ENCODE measurements at regions of chr5 and their contacts with region 1.

Region 1: DNA sequence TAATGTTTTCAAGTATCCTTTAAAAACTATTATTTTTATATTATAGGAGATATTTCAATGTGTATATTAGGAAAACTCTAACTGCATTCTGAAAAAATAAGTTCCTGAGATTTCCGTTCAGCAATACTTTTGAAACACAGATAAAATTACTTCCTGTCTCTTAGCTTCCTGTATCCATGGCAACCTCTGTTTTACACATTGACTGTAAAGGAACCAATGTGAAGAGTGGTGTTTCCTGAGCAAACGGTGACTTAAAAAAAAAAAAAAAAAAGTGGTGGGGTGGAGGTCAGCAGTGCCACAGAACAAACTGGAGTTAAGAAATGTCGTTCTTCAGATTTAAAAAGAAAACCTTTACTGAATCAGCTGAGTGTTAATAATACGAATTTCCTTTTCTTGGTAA is at the start of gene LRRC70:
- DNase-seq: peak; percentile 24
- H3K4me3 Mint-ChIP-seq: peak within 1 kb of the TSS; percentile 19
- H3K27ac Mint-ChIP-seq: peak within 1 kb of the TSS; percentile 77
- H3K4me1 Mint-ChIP-seq: peaks cover 53% of the 10 kb centered on the region
- H3K27me3 Mint-ChIP-seq: no peaks in the 10 kb centered on the region
- total RNA-seq, gene LRRC70: 0.46 and 1.1 TPM in 2 replicates

Region 2: DNA sequence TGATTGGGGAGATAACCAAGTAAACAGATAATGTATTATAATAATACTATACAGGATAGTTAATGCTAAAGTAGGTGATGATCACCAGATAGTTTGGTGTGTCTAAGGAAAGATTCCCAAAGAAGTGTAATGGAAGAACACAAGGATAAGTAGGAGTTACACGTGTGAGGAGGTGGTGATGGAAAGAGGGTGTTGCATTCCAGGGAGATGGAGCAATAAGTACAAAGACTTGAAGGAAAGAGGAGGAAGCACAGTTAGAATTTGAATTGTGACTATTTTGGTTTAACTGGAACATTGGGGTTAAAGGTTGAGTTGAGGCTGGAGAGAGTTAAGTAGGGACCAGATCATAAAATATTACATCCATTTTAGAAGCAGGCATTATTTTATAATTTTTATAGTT is 89.1 kb before region 1 on chr5:
- intact Hi-C with region 1: loop called (anchors 10 kb)
- DNase-seq: no peak
- H3K4me3 Mint-ChIP-seq: no peak overlapping the region
- H3K27ac Mint-ChIP-seq: no peak overlapping the region
- H3K4me1 Mint-ChIP-seq: peaks cover 3% of the 10 kb centered on the region
- H3K27me3 Mint-ChIP-seq: no peaks in the 10 kb centered on the region

Region 3: DNA sequence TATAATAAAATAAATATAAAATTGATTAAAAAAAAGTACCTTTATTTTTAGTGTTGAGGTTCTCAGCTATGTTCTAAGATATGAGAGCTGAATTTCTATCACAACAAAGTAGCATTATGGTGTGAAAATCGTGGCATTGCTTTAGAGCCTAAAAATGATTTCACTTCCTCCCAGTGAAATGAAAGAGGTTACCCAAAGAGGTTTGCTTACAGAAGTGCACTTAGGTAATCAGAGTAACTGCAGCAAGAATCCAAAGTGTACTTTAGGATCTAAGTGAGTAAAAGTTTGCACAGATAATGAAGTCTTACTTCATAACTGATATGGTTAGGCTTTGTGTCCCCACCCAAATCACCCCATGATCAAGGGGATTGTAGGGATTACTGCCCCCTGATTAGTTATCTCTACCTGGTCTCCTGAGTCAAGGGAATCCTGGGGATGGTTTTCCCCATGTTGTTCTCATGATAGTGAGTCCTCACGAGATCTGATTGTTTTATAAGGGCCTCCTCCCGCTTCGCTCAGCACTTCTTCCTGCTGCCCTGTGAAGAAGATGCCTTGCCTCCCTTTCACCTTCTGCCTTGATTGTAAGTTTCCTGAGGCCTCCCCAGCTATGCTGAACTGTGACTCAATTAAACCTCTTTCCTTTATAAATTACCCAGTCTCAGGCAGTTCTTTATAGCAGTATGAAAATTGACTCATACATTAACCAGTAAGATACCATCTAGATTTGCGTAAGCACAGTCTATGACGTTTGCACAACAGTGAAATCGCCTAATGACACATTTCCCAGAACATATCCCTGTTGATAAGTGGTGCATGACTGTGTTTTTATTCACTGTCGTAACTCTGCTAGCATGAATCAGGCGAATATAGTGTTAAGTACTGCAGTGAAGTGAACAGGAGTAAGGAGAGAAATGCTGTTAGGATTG is 40.3 kb before region 1 on chr5:
- intact Hi-C with region 1: loop called (anchors 5 kb)
- DNase-seq: no peak
- H3K4me3 Mint-ChIP-seq: no peak overlapping the region
- H3K27ac Mint-ChIP-seq: peak overlapping the region; percentile 66
- H3K4me1 Mint-ChIP-seq: peaks cover 7% of the 10 kb centered on the region
- H3K27me3 Mint-ChIP-seq: no peaks in the 10 kb centered on the region